HEK293 (cell line): ENCODE measurements at regions of chr12 and their contacts with region 1.

Region 1: GRCh38 chr12:92608151-92609091 is 94.4 kb upstream of the PLEKHG7 start:
- H3K4me3 ChIP-seq: no peak overlapping the region
- H3K27ac ChIP-seq: no peak overlapping the region
- H3K4me1 ChIP-seq: no peaks in the 10 kb centered on the region
- CTCF ChIP-seq: no peak

Region 2: GRCh38 chr12:92570056-92570753 is 38.2 kb before region 1 on chr12:
- CTCF ChIA-PET with region 1: interaction called, 13 read pairs
- POLR2A ChIA-PET with region 1: no interaction called
- H3K4me3 ChIP-seq: no peak overlapping the region
- H3K27ac ChIP-seq: no peak overlapping the region
- H3K4me1 ChIP-seq: no peaks in the 10 kb centered on the region
- CTCF ChIP-seq: peak; percentile 81

Region 3: GRCh38 chr12:92649511-92650227 is 41.2 kb after region 1 on chr12:
- CTCF ChIA-PET with region 1: interaction called, 11 read pairs
- POLR2A ChIA-PET with region 1: no interaction called
- H3K4me3 ChIP-seq: no peak overlapping the region
- H3K27ac ChIP-seq: no peak overlapping the region
- H3K4me1 ChIP-seq: no peaks in the 10 kb centered on the region
- CTCF ChIP-seq: peak; percentile 85

Region 4: GRCh38 chr12:92706594-92706993 is 98.2 kb after region 1 on chr12:
- CTCF ChIA-PET with region 1: no interaction called
- POLR2A ChIA-PET with region 1: no interaction called
- H3K4me3 ChIP-seq: no peak overlapping the region
- H3K27ac ChIP-seq: no peak overlapping the region
- H3K4me1 ChIP-seq: no peaks in the 10 kb centered on the region
- CTCF ChIP-seq: no peak

Region 5: DNA sequence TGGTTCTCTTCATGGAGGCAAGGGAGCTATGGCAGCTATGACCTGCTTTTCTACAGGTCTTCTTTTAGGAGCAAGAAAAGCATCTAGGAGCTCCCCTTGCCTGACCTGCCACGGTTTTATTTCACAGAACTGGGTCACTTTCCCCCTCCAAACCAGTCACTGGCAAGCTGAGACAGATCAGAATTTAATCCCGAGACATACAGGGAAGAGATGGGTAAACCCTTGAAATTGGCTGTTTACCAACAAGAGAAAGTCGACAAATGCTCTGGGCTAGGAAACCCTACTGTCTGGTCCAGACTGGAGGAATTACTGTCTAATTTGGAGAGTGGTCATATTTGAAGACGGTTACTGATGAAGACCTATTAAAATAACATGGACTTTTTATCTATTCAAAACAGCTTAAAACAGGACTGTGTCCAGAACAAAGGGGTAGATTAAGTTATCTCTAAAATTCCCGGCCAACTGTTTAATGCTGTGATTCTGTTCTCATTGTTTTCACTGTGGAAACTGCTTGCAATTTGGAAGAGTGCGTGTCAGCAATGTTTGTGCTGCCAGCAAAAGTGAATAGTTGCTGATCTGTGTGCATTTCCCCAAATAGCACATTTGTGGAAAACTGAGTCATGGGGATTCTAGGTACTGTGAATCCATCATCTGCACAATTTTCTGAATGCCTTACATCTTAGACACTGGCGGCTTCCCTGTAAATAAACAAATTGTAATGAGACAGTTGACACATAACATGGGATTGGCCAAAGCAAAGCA is 394.1 kb after region 1 on chr12:
- CTCF ChIA-PET with region 1: no interaction called
- POLR2A ChIA-PET with region 1: no interaction called
- H3K4me3 ChIP-seq: no peak overlapping the region
- H3K27ac ChIP-seq: no peak overlapping the region
- H3K4me1 ChIP-seq: peaks cover 12% of the 10 kb centered on the region
- CTCF ChIP-seq: no peak